ENCODE measurements at regions of chrX and their contacts with region 1.

Region 1: DNA sequence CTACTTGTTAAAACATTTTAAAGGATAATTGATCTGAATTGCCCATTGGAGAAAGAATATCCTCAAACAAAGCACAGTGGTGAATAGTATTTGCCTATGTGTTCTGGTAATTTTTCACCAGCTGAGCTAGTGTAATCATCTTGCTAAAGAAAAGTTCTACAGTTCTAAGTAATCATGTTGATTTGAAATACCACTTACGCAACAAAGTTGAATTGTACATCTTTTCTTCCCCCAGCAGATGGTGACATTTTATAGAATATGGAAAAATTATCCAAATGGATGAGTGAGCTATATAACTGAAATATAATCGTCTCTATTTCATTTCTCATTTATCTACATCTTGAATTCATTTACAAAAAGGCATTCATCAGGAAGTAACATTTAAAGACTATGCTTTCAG is 9.7 kb upstream of the ZNF674 start:
- DNase-seq: no peak
- ATAC-seq: no peak
- H3K4me3 ChIP-seq: no peak overlapping the region
- H3K27ac ChIP-seq: no peak overlapping the region
- H3K4me1 ChIP-seq: no peaks in the 10 kb centered on the region
- H3K27me3 ChIP-seq: no peaks in the 10 kb centered on the region
- CTCF ChIP-seq: no peak
- POLR2A ChIP-seq: no peak

Region 2: DNA sequence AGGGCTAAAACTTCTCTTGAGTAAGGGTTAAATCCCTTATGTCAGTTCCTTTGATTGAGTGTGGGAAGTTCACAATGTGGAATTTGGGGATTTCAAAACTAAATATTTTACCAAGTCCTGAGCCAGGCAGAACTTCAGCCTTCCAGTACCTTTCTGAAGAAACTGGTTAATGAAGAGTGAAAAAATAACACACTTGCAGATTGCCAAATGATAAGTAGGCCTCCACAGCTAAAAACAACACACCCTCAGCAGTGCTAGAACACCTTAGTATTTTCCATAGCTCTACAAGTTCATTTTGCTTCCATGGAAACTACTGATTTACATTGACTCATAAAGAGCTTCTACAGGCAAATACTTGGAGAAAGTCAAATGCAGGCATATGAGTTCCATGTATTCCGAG is 336.6 kb before region 1 on chrX:
- in situ Hi-C with region 1: no loop called
- intact Hi-C with region 1: no loop called
- DNase-seq: no peak
- ATAC-seq: no peak
- H3K4me3 ChIP-seq: no peak overlapping the region
- H3K27ac ChIP-seq: no peak overlapping the region
- H3K4me1 ChIP-seq: no peaks in the 10 kb centered on the region
- H3K27me3 ChIP-seq: peaks cover 0 to 3% (median 0%) of the 10 kb centered on the region in 3 donors
- CTCF ChIP-seq: no peak
- POLR2A ChIP-seq: no peak

Region 3: GRCh38 chrX:46642145-46642544 is 87.2 kb after region 1 on chrX:
- in situ Hi-C with region 1: loop called in 1 of 4 experiments (anchors 10 kb)
- intact Hi-C with region 1: no loop called
- DNase-seq: no peak
- ATAC-seq: no peak
- H3K4me3 ChIP-seq: no peak overlapping the region
- H3K27ac ChIP-seq: no peak overlapping the region
- H3K4me1 ChIP-seq: peaks cover 0 to 3% of the 10 kb centered on the region in 2 donors
- H3K27me3 ChIP-seq: no peaks in the 10 kb centered on the region
- CTCF ChIP-seq: peak in 3 of 5 experiments; percentile 17 to 38 (median 33)
- POLR2A ChIP-seq: no peak

Region 4: GRCh38 chrX:46686003-46686645 is 131.2 kb after region 1 on chrX:
- in situ Hi-C with region 1: loop called in 1 of 4 experiments (anchors 10 kb)
- intact Hi-C with region 1: no loop called
- DNase-seq: no peak
- ATAC-seq: no peak
- H3K4me3 ChIP-seq: no peak overlapping the region
- H3K27ac ChIP-seq: no peak overlapping the region
- H3K4me1 ChIP-seq: peaks cover 0 to 4% of the 10 kb centered on the region in 2 donors
- H3K27me3 ChIP-seq: no peaks in the 10 kb centered on the region
- CTCF ChIP-seq: peak in 3 of 5 experiments; percentile 40 to 70 (median 54)
- POLR2A ChIP-seq: no peak

Measured in gastrocnemius medialis (tissue), 4 donors.